Common myeloid progenitor, CD34-positive (primary cell): ENCODE measurements at regions of chr11 and their contacts with region 1.

Region 1: DNA sequence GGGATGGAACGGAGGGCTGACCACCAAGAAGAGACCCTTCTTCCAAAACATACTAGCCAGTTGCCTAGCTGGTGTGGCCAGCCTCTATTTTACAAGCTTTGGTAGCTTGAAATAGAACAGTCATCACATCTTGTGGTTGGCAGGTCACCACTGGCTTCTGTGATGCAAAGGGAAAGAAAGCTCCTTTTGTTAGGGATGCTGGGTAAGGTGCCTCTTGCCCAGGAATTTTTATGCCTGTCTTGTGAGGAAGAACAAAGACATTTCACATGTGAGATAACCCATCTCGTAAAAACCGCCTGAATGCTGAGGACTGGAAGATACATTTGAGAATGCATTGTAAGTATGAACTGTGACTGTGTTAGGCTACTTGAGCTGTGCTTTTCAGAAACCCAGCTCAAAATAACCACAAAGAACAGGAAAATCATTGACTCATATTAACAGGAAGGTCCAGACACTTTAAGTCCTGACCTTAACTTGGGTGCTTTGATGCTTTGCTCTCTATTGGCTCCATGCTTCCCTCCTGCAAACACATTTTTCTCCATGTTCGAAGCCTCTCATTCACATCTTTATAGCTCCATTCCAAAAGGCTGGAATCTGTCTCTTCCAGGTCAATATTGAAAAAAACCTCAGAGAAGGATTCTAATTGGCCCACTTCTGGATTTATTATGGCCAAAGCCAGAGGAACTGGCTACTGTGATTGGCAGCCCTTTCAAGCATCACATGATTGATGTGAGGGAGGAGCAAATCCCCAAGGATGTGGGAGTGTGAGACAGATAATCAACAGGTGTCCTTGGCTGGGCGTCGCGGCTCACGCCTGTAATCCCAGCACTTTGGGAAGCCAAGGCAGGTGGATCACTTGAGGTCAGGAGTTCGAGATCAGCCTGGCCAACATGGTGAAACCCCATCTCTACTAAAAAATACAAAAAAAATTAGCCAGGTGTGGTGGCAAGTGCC is 53.9 kb downstream of the MICAL2 start:
- DNase-seq: no peak
- H3K4me3 ChIP-seq: no peak overlapping the region
- H3K27ac ChIP-seq: no peak overlapping the region
- H3K4me1 ChIP-seq: peaks cover 0 to 28% (median 6%) of the 10 kb centered on the region in 4 experiments
- H3K27me3 ChIP-seq: no peaks in the 10 kb centered on the region

Region 2: DNA sequence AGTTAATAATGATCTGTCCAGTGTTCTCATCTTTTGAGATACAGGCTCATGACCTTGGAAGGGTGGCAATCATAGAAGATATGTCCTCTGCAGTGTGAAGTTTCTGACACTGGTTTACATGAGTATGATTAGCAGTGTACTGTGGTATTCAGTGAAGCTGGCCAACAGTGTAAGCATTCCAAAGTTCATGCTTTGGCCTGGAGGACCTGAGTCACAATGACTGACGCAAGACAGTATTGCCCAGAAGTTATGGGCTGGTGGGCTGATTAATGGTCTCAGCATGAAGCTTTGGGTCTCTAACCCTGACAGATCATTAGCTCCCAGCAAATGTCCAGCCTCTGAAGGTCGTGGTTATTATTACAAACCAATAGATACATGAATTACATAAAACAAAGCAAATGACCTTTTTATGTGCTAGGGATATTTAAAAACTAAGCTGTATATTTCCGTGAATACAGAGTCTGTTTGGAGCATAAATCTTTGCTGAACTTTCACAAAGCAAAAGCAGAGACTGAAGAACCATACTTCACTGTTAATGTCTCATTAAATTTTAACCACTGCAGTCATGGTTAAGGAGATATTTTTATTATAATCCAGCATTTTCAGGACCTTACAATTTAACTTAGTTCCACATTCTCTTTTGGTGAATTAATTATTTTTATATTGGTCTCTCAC is 350.9 kb before region 1 on chr11:
- CTCF ChIA-PET with region 1: no interaction called
- POLR2A ChIA-PET with region 1: no interaction called
- DNase-seq: no peak
- H3K4me3 ChIP-seq: no peak overlapping the region
- H3K27ac ChIP-seq: no peak overlapping the region
- H3K4me1 ChIP-seq: no peaks in the 10 kb centered on the region
- H3K27me3 ChIP-seq: no peaks in the 10 kb centered on the region

Region 3: GRCh38 chr11:12150831-12151382 is 13.4 kb before region 1 on chr11:
- CTCF ChIA-PET with region 1: interaction called, 13 read pairs
- POLR2A ChIA-PET with region 1: no interaction called
- DNase-seq: peak in 2 of 3 donors; percentile 64 to 80
- H3K4me3 ChIP-seq: no peak overlapping the region
- H3K27ac ChIP-seq: no peak overlapping the region
- H3K4me1 ChIP-seq: peaks cover 3 to 57% (median 22%) of the 10 kb centered on the region in 4 experiments
- H3K27me3 ChIP-seq: no peaks in the 10 kb centered on the region